ENCODE measurements at regions of chr11 and their contacts with region 1.

Region 1: GRCh38 chr11:75248690-75249268 is 8.2 kb downstream of the TPBGL start:
- DNase-seq: peak; percentile 82 to 94 (median 86)
- ATAC-seq: peak; percentile 95
- H3K4me3 ChIP-seq: no peak overlapping the region
- H3K27ac ChIP-seq: no peak overlapping the region
- H3K4me1 ChIP-seq: no peaks in the 10 kb centered on the region; a peak in 1 of 5 replicates
- H3K27me3 ChIP-seq: peaks cover 6 to 8% of the 10 kb centered on the region in 2 experiments
- CTCF ChIP-seq: peak; percentile 100
- EP300 ChIP-seq: no peak
- POLR2A ChIP-seq: no peak
- RAD21 ChIP-seq: peak; percentile 99 to 100

Region 2: GRCh38 chr11:74702383-74703007 is 546.3 kb before region 1 on chr11:
- CTCF ChIA-PET with region 1: interaction called, 13 read pairs
- POLR2A ChIA-PET with region 1: interaction called, 3 read pairs
- in situ Hi-C with region 1: no loop called
- intact Hi-C with region 1: loop called (anchors 10 kb)
- DNase-seq: peak; percentile 79 to 85 (median 84)
- ATAC-seq: peak; percentile 88
- H3K4me3 ChIP-seq: no peak overlapping the region
- H3K27ac ChIP-seq: no peak overlapping the region
- H3K4me1 ChIP-seq: peaks cover 6 to 12% of the 10 kb centered on the region in 2 experiments; a peak in 3 of 5 replicates
- H3K27me3 ChIP-seq: no peaks in the 10 kb centered on the region
- CTCF ChIP-seq: peak; percentile 91 to 95 (median 92)
- EP300 ChIP-seq: no peak
- POLR2A ChIP-seq: no peak
- RAD21 ChIP-seq: peak; percentile 57 to 77

Region 3: GRCh38 chr11:74929431-74930363 is 319.1 kb before region 1 on chr11:
- CTCF ChIA-PET with region 1: interaction called, 92 read pairs
- POLR2A ChIA-PET with region 1: no interaction called
- in situ Hi-C with region 1: loop called (anchors 5 kb)
- intact Hi-C with region 1: loop called (anchors 1 kb)
- DNase-seq: peak; percentile 45 to 92 (median 54)
- ATAC-seq: peak; percentile 98
- H3K4me3 ChIP-seq: no peak overlapping the region
- H3K27ac ChIP-seq: no peak overlapping the region
- H3K4me1 ChIP-seq: no peaks in the 10 kb centered on the region; a peak in 1 of 5 replicates
- H3K27me3 ChIP-seq: no peaks in the 10 kb centered on the region
- CTCF ChIP-seq: peak; percentile 82 to 92 (median 88)
- EP300 ChIP-seq: no peak
- POLR2A ChIP-seq: no peak
- RAD21 ChIP-seq: peak; percentile 91 to 93

Region 4: DNA sequence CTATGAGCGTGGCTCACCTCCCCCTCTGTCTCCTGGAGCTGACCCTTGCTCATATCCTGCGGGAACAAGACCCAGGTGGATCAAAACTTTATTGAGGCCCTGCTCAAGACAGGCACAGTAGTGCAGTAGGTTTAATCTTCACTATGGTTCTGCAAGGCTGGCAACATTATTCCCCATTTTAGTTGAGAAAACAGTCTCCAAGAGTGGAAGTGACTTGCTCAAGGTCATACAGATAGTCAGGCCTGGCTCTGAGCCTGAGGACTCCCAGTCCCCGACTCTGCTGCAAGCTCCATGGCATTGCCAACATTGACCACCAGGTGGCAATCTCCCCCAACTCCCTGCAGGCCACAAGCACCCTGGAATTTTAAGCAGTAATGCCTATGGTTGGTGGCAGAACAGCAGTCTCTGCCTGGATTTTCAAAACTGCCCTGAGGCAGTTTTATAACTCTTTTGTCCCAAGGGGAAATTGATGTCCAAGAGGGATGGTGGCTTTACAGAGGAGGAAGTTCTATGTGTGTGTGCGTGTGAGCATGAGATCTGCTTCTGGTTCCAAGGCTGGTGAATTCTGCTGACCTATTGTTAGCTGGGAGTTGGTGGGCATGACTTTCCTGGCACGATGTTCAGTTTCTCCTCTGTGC is 225.9 kb before region 1 on chr11:
- CTCF ChIA-PET with region 1: interaction called, 31 read pairs
- POLR2A ChIA-PET with region 1: no interaction called
- in situ Hi-C with region 1: loop called (anchors 5 kb)
- intact Hi-C with region 1: loop called (anchors 1 kb)
- DNase-seq: peak; percentile 85 to 92 (median 89)
- ATAC-seq: peak; percentile 99
- H3K4me3 ChIP-seq: no peak overlapping the region
- H3K27ac ChIP-seq: peak overlapping the region; percentile 13; the same call in 1 of the 3 replicates
- H3K4me1 ChIP-seq: peaks cover 6 to 18% of the 10 kb centered on the region in 2 experiments; a peak in 4 of 5 replicates
- H3K27me3 ChIP-seq: no peaks in the 10 kb centered on the region
- CTCF ChIP-seq: peak; percentile 97 to 99 (median 99)
- EP300 ChIP-seq: peak; percentile 46
- POLR2A ChIP-seq: no peak
- RAD21 ChIP-seq: peak; percentile 98 to 99

Region 5: GRCh38 chr11:75142714-75143419 is 105.9 kb before region 1 on chr11:
- CTCF ChIA-PET with region 1: interaction called, 39 read pairs
- POLR2A ChIA-PET with region 1: no interaction called
- in situ Hi-C with region 1: no loop called
- intact Hi-C with region 1: loop called (anchors 1 kb)
- DNase-seq: peak; percentile 84 to 91 (median 88)
- ATAC-seq: peak; percentile 86
- H3K4me3 ChIP-seq: no peak overlapping the region
- H3K27ac ChIP-seq: peak overlapping the region; percentile 33; the same call in 1 of the 3 replicates
- H3K4me1 ChIP-seq: peaks cover 22 to 32% of the 10 kb centered on the region in 2 experiments
- H3K27me3 ChIP-seq: no peaks in the 10 kb centered on the region
- CTCF ChIP-seq: 0 out of 6 replicates have a peak, but pooled peaks of 1 of the 3 experiments have one; percentile 2
- EP300 ChIP-seq: 0 out of 2 replicates have a peak, but pooled peaks have one; percentile 23
- POLR2A ChIP-seq: no peak
- RAD21 ChIP-seq: no peak

Region 6: GRCh38 chr11:75204685-75205563 is 43.9 kb before region 1 on chr11:
- CTCF ChIA-PET with region 1: no interaction called
- POLR2A ChIA-PET with region 1: interaction called, 3 read pairs
- in situ Hi-C with region 1: no loop called
- intact Hi-C with region 1: loop called (anchors 5 kb)
- DNase-seq: peak; percentile 87 to 92 (median 90)
- ATAC-seq: peak; percentile 99
- H3K4me3 ChIP-seq: no peak overlapping the region
- H3K27ac ChIP-seq: no peak overlapping the region
- H3K4me1 ChIP-seq: peaks cover 6 to 10% of the 10 kb centered on the region in 2 experiments
- H3K27me3 ChIP-seq: no peaks in the 10 kb centered on the region; a peak in 1 of 5 replicates
- CTCF ChIP-seq: peak; percentile 94 to 96 (median 94)
- EP300 ChIP-seq: no peak
- POLR2A ChIP-seq: no peak
- RAD21 ChIP-seq: peak; percentile 92 to 94

Region 7: DNA sequence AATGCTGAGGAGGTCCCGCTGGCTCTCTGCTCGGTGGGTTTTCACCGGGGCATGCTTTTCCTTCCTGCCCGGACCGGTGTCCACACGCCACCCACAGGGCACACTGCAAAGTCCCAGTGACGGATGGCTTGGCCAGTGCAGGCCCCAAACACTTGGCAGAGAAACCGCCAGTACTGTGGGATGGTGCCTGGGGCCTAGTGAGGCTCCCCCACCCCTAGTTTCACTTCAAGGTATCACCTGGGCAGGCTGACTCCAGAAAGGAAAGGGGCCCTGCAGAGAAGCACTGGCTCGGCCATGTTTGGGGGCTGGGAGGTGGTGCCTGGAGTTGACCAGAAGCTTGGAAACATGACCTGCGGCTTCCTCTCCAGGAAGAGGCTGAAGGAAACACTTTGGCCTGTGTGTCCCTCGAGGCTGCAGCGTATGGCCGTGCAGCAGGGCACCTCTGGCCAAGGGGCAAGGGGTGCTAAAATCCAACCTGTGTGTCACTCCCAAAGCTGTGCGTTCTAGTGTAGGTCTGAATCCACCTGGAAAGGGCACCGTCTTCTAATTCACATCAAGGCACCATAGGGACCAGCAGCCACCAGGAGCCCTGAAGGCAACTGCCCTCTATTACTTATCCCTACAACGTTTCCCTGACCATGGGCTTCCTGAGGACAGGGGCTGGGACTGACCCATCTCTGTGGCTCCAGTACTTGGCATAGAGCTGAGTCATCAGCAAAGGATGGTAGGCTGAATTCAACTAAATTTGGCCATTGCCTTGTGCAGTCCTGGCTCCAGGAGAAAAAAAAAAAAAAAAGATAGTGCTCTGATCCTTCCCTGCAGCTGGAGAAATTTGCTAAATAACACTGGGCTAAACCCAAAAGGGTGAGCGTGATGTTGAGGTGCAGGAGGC is 14.4 kb after region 1 on chr11:
- CTCF ChIA-PET with region 1: no interaction called
- POLR2A ChIA-PET with region 1: interaction called, 11 read pairs
- in situ Hi-C with region 1: no loop called
- intact Hi-C with region 1: no loop called
- DNase-seq: no peak
- ATAC-seq: peak; percentile 5; the same call in 1 of the 3 replicates
- H3K4me3 ChIP-seq: no peak overlapping the region
- H3K27ac ChIP-seq: no peak overlapping the region
- H3K4me1 ChIP-seq: peaks cover 0 to 9% of the 10 kb centered on the region in 2 experiments; a peak in 2 of 5 replicates
- H3K27me3 ChIP-seq: no peaks in the 10 kb centered on the region
- CTCF ChIP-seq: no peak
- EP300 ChIP-seq: no peak
- POLR2A ChIP-seq: no peak
- RAD21 ChIP-seq: no peak

Region 8: GRCh38 chr11:75562048-75562835 is 313.5 kb after region 1 on chr11 and contains the start of gene SERPINH1:
- CTCF ChIA-PET with region 1: no interaction called
- POLR2A ChIA-PET with region 1: no interaction called
- in situ Hi-C with region 1: no loop called
- intact Hi-C with region 1: no loop called
- DNase-seq: peak; percentile 84 to 93 (median 88)
- ATAC-seq: peak; percentile 86
- H3K4me3 ChIP-seq: peak within 1 kb of the TSS; percentile 64
- H3K27ac ChIP-seq: peak within 1 kb of the TSS; percentile 77
- H3K4me1 ChIP-seq: peaks cover 58 to 69% of the 10 kb centered on the region in 2 experiments
- H3K27me3 ChIP-seq: no peaks in the 10 kb centered on the region
- CTCF ChIP-seq: 0 out of 6 replicates have a peak, but pooled peaks of 1 of the 3 experiments have one; percentile 7
- EP300 ChIP-seq: no peak; the same call in 1 of the 2 replicates
- POLR2A ChIP-seq: peak; percentile 97
- RAD21 ChIP-seq: no peak
- polyA plus RNA-seq, gene SERPINH1: 2.8 to 6.8 TPM

Measured in K562 (cell line).